Head of caudate nucleus (tissue), 42 donors: ENCODE measurements at regions of chr17 and their contacts with region 1.

Region 1: GRCh38 chr17:12020642-12021622 is at the start of gene MAP2K4:
- DNase-seq: peak; percentile 78 to 97 (median 96)

Region 2: GRCh38 chr17:11997147-11997846 is 23.6 kb before region 1 on chr17 and contains the start of gene ZNF18:
- intact Hi-C with region 1: loop called (anchors 2 kb)
- DNase-seq: peak; percentile 92 to 99 (median 97)

Region 3: DNA sequence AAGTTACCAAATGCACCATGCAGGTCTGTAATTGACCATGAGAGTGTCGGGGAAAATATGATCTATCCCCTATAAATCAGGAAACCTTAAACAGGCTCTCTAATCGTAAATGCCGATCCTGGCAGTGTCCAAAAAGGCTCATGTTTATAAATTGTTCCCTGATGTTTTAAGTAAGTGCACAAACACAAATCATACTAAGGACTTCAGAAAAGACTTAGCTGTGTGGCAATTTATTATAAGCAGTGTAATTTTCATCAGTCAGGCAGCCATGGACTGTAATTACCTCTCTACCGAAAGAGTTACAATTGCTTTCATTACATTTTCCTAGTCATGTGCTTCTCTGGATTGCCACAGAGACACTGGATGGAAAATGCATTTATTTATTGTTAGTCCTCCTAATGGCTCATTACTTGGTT is 1974.9 kb after region 1 on chr17:
- intact Hi-C with region 1: no loop called
- DNase-seq: no peak